Left cardiac atrium (tissue), 4 donors: ENCODE measurements at regions of chr16 and their contacts with region 1.

Region 1: DNA sequence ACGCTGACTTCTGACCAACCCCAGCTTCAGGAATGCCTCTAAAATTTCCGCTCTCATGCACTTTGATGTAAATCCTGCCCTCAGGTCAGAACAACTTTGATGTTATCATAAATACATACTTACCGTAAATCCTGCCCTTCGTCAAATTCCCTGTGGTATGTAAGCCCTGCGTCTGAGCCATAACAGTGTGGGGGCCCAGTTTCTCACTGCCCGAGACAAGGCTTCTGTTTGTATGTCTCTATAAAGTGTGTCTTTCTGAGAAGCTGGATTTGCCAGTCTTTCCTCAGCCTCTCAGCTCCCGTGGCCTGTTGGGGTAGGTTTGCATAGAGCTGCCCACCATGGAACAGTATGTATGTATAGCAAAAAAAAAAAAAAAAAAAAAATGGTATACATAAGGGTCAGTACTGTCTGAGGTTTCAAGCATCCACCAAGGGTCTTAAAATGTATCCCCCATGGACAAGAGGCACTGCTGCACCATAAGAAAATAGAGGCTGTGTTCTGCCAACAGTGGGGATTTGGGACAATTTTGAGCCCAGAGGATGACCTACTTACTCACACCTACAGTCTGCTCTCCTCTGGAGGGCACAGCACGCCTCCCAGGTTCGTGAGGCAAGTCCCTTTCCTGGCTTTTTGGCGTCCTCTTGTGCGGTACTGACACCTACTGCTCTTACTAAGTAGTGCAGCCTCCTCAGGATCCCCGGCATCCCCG is 17.5 kb downstream of the PRMT7 start:
- DNase-seq: peak; percentile 79
- ATAC-seq: peak; percentile 91 to 93

Region 2: GRCh38 chr16:68244903-68245853 is 83.1 kb before region 1 on chr16 and contains the start of gene PLA2G15:
- intact Hi-C with region 1: loop called (anchors 2 to 5 kb)
- DNase-seq: peak; percentile 97
- ATAC-seq: peak; percentile 97 to 99
- total RNA-seq, gene PLA2G15: 20.5 to 27.4 TPM

Region 3: GRCh38 chr16:68264128-68265077 is 63.9 kb before region 1 on chr16 and contains the start of gene SLC7A6:
- intact Hi-C with region 1: loop called (anchors 1 to 5 kb)
- DNase-seq: peak; percentile 87
- ATAC-seq: peak; percentile 83 to 84
- total RNA-seq, gene SLC7A6: 33.0 to 51.6 TPM